CD8-positive, alpha-beta memory T cell (primary cell): ENCODE measurements at regions of chr11 and their contacts with region 1.

Region 1: DNA sequence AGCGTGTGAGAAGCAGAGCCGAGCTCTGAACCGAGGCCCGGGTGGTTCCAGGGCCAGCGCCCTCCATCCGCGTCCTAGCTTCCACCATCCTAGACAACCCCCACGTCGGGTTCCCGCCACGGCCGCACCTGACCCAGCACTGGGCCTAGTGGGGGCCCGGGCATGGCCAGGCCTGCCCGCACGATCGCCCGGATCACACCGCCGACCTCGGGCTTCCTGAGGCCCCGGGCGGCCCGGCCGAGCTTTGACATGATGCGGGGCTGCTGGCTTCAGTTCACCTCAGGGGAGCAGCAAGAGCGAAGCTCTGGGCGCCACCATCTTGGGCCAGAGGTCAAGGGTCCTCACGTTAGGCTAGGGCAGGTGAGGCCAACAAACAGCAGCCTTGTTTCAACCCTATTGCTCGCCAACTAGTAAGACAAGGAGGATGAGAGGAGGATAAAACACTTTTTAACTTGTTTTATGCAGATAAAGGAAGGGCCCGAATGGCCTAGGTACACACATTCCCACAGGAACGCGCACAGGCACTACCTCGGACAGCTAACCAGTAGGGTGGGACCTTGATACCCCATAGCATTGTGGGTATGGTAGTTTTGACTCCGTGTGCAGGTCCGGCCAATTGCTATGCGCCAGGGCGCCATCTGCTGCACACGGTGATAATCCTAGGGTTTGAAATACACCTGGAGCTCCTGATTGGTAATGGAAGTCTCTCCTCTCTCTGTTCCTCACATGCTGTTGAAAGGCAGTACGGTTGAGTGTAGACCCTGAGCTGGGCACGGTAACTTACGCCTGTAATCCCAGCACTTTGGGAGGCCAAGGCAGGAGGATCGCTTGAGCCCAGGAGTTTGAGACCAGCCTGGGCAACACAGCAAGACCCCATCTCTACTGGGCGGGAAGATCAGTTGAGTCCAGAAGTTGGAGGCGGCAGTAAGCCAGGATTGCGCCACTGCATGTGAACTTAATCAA is at the start of gene MRPL11:
- DNase-seq: peak; percentile 73 to 91 (median 86)
- H3K4me3 ChIP-seq: peak within 1 kb of the TSS; percentile 68
- H3K4me3 Mint-ChIP-seq: peak within 1 kb of the TSS; percentile 80 to 94 (median 92)
- H3K27ac ChIP-seq: peak within 1 kb of the TSS; percentile 67
- H3K27ac Mint-ChIP-seq: peak within 1 kb of the TSS; percentile 77 to 100 (median 97)
- H3K4me1 ChIP-seq: peaks cover 7% of the 10 kb centered on the region
- H3K4me1 Mint-ChIP-seq: peaks cover 8 to 16% (median 8%) of the 10 kb centered on the region in 3 donors
- H3K27me3 ChIP-seq: no peaks in the 10 kb centered on the region
- H3K27me3 Mint-ChIP-seq: peaks cover 1 to 10% of the 10 kb centered on the region in 2 donors
- total RNA-seq, gene MRPL11: 148 to 152 TPM

Region 2: DNA sequence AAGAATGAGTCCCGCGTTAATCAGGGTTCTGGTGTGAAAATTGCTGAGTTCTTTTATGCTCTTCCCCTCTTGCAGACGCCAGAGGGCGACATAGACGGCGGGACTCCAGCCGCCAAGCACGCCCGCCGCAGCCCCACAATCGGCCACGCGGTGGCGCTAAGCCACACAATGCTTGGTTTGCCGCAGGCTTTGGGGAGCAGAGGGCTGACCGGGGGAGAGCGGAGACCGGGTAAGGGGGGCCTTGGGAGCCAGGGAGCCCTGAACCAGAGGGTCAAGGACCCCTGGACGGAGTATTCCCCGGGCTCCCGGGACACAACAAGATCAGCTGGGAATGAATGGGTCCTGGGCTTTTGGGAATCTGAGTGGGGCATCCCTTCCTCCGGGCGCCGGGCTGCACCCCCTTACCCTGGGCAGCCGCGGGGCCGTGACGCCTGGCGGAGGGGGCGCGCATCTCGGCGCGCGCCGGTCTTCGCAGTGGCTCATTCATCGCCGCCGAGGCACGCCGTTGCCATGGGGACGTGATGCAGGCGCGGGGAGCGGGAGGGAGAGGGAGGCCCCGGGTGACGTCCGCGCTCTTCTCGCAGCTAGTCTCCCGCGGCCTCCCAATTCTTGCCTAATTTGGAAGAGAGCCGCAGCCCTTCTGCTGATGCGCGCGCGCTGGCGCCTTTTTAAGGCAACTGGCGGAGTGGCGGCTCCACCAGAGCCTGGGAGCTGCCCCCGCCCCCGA is 30.1 kb before region 1 on chr11:
- CTCF ChIA-PET with region 1: interaction called, 18 read pairs
- POLR2A ChIA-PET with region 1: no interaction called
- DNase-seq: peak; percentile 82 to 92 (median 90)
- H3K4me3 ChIP-seq: peak overlapping the region; percentile 61
- H3K4me3 Mint-ChIP-seq: peak overlapping the region; percentile 21 to 90 (median 81)
- H3K27ac ChIP-seq: no peak overlapping the region
- H3K27ac Mint-ChIP-seq: peak overlapping the region in 5 of 8 donors; percentile 34 to 83 (median 64)
- H3K4me1 ChIP-seq: peaks cover 3% of the 10 kb centered on the region
- H3K4me1 Mint-ChIP-seq: peaks cover 2 to 5% (median 4%) of the 10 kb centered on the region in 3 donors
- H3K27me3 ChIP-seq: peaks cover 9% of the 10 kb centered on the region
- H3K27me3 Mint-ChIP-seq: peaks cover 24 to 52% of the 10 kb centered on the region in 2 donors

Region 3: GRCh38 chr11:66421492-66422205 is 17.1 kb before region 1 on chr11:
- CTCF ChIA-PET with region 1: interaction called, 16 read pairs
- POLR2A ChIA-PET with region 1: interaction called, 5 read pairs
- DNase-seq: peak; percentile 81 to 92 (median 84)
- H3K4me3 ChIP-seq: no peak overlapping the region
- H3K4me3 Mint-ChIP-seq: peak overlapping the region in 2 of 7 donors; percentile 18 to 25
- H3K27ac ChIP-seq: no peak overlapping the region
- H3K27ac Mint-ChIP-seq: peak overlapping the region in 2 of 8 donors; percentile 42 to 88
- H3K4me1 ChIP-seq: no peaks in the 10 kb centered on the region
- H3K4me1 Mint-ChIP-seq: peaks cover 5 to 13% (median 8%) of the 10 kb centered on the region in 3 donors
- H3K27me3 ChIP-seq: peaks cover 29% of the 10 kb centered on the region
- H3K27me3 Mint-ChIP-seq: peaks cover 26 to 30% of the 10 kb centered on the region in 2 donors

Region 4: DNA sequence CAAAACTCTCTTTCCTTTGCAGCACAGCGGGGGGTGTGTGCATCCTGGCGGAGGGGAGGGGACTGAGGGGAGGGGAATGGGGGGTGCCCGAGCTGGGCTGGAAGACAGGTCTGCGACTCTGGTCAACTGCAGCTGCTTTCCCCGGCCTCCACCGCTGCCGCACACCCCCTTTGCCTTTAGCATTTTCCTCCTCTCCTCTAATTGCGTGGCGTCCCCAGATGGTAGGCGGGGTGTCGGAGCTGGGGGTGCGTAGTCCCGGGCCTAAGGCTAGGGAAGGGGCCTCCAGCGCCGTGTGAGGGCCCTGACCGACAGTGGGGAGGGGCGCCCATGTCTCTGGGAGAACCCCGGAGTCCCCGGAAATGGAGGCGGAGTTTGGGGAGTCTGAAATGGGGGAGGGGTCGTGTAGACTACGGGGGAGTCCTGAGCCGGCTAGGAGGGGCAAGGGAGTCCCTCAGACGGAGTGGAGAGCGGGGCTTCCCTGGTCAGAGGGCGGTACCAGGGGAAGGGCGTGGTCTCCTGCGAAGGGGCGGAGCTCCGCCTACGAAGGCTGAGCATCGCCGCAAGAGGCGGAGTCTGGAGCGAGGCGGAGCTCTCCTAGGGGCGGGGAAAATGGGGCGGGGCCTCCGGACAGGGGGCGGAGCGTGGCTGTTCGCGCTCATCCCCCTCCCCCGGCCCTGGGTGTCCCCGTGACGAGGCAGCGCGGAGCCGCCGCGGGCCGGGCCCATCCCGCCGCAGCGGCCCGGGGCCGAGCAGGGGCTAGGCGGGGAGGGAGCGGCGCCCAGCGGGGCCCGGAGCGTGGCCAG is 27.6 kb after region 1 on chr11 and contains the start of gene PELI3:
- CTCF ChIA-PET with region 1: interaction called, 11 read pairs
- POLR2A ChIA-PET with region 1: interaction called, 16 read pairs
- DNase-seq: peak; percentile 91 to 97 (median 94)
- H3K4me3 ChIP-seq: peak within 1 kb of the TSS; percentile 78
- H3K4me3 Mint-ChIP-seq: peak within 1 kb of the TSS; percentile 87 to 97 (median 90)
- H3K27ac ChIP-seq: peak within 1 kb of the TSS; percentile 60
- H3K27ac Mint-ChIP-seq: peak within 1 kb of the TSS; percentile 88 to 98 (median 92)
- H3K4me1 ChIP-seq: peaks cover 11% of the 10 kb centered on the region
- H3K4me1 Mint-ChIP-seq: peaks cover 18 to 28% (median 20%) of the 10 kb centered on the region in 3 donors
- H3K27me3 ChIP-seq: no peaks in the 10 kb centered on the region
- H3K27me3 Mint-ChIP-seq: no peaks in the 10 kb centered on the region
- total RNA-seq, gene PELI3: 5.3 to 6.6 TPM